HepG2 (cell line): ENCODE measurements at regions of chr7 and their contacts with region 1.

Region 1: DNA sequence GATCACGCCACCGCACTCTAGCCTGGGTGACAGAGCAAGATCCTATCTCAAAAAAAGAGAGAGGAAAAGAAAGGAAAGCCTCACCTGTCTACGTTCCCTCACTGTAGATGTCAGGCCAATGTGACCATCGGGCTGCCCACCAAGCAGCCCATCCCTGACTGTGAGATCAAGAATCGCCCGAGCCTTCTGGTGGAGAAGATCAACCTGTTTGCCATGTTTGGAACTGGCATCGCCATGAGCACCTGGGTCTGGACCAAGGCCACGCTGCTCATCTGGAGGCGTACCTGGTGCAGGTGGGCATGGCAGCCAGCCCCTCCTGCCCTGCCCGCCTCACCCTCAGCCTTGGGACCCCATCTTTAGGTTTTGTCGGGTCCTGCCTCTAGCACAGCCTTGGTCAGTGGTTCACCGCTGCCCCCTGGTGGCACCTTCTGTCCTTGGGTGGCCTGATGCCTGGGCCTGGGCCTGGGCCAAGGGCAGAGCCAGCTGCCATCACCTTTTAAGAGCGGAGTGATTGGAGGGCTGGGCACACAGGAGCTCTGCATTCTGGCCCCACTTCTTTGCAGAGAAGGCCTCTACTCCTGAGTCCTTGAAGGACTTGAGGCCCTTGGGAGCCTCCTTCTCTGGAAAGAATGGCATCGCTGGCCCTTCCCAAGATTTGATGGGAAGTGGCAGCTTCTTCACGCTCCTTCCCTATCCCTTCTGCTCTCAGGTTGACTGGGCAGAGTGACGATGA is 14.4 kb upstream of the AHCYL2 start:
- DNase-seq: peak; percentile 45
- ATAC-seq: peak; percentile 81
- H3K4me3 ChIP-seq: no peak overlapping the region
- H3K27ac ChIP-seq: no peak overlapping the region
- H3K4me1 ChIP-seq: peaks cover 10% of the 10 kb centered on the region
- H3K27me3 ChIP-seq: no peaks in the 10 kb centered on the region
- CTCF ChIP-seq: peak; percentile 97
- EP300 ChIP-seq: no peak
- POLR2A ChIP-seq: no peak
- RAD21 ChIP-seq: peak; percentile 92

Region 2: DNA sequence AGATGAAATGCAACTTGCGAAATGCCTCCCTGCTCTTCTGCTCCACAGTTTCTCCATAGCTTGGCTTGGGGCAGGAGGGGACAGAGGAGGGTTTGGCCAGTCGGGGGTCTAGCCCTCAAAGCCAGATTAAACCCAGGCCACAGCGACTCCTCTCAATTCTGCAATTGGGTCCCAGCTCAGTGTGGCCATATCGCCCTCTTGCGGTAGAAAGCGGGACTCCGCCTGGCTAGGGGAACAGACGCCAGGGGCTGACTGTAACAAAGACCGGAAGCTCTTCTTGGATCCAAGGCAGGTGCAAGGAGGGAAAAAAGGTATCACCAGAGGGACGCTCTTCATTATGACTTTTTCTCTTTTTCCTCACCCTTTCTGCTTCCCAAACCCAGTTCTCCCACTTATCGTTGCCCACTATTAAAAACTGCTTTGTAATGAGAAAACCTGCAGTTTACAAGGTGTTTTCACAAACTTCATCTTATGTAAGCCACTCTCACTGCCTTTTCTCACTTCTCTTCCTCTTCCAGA is 118.9 kb before region 1 on chr7:
- CTCF ChIA-PET with region 1: no interaction called
- POLR2A ChIA-PET with region 1: interaction called, 3 read pairs
- in situ Hi-C with region 1: no loop called
- intact Hi-C with region 1: loop called (anchors 2 kb)
- DNase-seq: peak; percentile 63
- ATAC-seq: peak; percentile 97
- H3K4me3 ChIP-seq: peak overlapping the region in 1 of 3 experiments; percentile 29; a peak in 2 of 6 replicates
- H3K27ac ChIP-seq: no peak overlapping the region
- H3K4me1 ChIP-seq: peaks cover 26% of the 10 kb centered on the region
- H3K27me3 ChIP-seq: no peaks in the 10 kb centered on the region
- CTCF ChIP-seq: peak; percentile 98
- EP300 ChIP-seq: no peak
- POLR2A ChIP-seq: no peak
- RAD21 ChIP-seq: peak; percentile 92

Region 3: GRCh38 chr7:129163875-129164544 is 46.4 kb before region 1 on chr7:
- CTCF ChIA-PET with region 1: interaction called, 50 read pairs
- POLR2A ChIA-PET with region 1: interaction called, 4 read pairs
- in situ Hi-C with region 1: loop called (anchors 5 kb)
- intact Hi-C with region 1: loop called (anchors 1 kb)
- DNase-seq: peak; percentile 40
- ATAC-seq: peak; percentile 49; the same call in 1 of the 3 replicates
- H3K4me3 ChIP-seq: no peak overlapping the region
- H3K27ac ChIP-seq: no peak overlapping the region
- H3K4me1 ChIP-seq: no peaks in the 10 kb centered on the region
- H3K27me3 ChIP-seq: no peaks in the 10 kb centered on the region
- CTCF ChIP-seq: peak; percentile 70
- EP300 ChIP-seq: no peak
- POLR2A ChIP-seq: no peak
- RAD21 ChIP-seq: peak; percentile 57; the same call in 1 of the 2 replicates

Region 4: DNA sequence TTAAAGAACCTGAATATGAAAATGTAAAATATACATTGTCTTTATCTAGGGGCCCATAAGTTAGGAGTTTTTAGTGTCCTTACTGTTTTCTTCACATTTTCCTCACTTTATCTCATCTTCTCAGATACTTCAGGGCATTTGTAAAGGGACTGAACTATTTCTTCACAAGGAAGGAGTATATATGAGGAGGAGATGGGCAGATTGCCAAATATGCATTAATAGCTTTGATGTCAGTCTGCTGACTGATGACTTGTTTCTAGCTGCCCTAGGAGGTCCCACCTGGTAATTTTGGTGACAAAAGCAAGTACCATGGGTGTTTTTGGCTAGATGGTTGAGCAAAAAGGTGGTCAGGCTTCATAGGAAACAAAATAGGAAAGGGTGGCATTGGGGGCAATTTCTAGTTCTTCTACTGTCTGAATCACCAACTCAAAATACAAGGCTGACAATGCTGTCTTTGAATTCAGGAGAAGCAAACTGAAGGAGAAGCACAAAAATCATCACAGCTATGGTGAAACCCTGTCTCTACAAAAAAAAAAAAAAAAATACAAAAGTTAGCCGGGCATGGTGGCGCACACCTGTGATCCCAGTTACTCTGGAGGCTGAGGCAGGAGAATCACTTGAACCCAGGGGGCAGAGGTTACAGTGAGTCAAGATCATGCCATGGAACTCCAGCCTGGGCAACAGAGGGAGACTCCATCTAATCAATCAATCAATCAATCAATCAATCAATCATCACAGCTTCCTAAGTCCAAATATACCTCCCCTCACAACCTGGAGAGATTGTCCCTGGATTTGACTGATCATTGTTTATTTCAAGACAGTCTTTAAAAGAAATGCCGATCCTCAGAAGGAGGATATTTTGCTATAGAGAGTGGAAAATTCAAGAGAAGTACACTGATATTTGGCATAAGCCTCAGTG is 213.5 kb after region 1 on chr7:
- CTCF ChIA-PET with region 1: no interaction called
- POLR2A ChIA-PET with region 1: no interaction called
- in situ Hi-C with region 1: no loop called
- intact Hi-C with region 1: no loop called
- DNase-seq: peak; percentile 12
- ATAC-seq: no peak
- H3K4me3 ChIP-seq: no peak overlapping the region
- H3K27ac ChIP-seq: no peak overlapping the region
- H3K4me1 ChIP-seq: no peaks in the 10 kb centered on the region
- H3K27me3 ChIP-seq: no peaks in the 10 kb centered on the region
- CTCF ChIP-seq: no peak
- EP300 ChIP-seq: no peak
- POLR2A ChIP-seq: no peak
- RAD21 ChIP-seq: no peak

Region 5: DNA sequence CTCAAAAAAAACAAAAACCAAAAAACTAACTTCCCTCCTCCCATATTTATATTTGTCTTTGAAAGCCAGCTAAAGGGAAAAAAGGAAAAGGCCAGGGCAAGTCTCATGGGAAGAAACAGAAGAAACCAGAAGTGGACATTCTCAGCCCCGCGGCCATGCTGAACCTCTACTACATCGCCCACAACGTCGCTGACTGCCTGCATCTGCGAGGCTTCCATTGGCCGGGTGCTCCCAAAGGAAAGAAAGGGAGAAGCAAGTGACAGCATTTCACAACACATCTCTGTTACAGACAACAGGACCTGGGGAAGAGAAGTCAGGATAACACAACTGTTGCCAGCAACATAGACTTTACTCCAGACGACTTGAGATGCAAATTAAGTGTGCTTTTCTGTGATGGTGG is 301.8 kb after region 1 on chr7:
- CTCF ChIA-PET with region 1: no interaction called
- POLR2A ChIA-PET with region 1: no interaction called
- in situ Hi-C with region 1: no loop called
- intact Hi-C with region 1: no loop called
- DNase-seq: no peak
- ATAC-seq: peak; percentile 38; the same call in 1 of the 3 replicates
- H3K4me3 ChIP-seq: no peak overlapping the region
- H3K27ac ChIP-seq: no peak overlapping the region
- H3K4me1 ChIP-seq: no peaks in the 10 kb centered on the region
- H3K27me3 ChIP-seq: peaks cover 4 to 33% of the 10 kb centered on the region in 2 experiments; a peak in 2 of 5 replicates
- CTCF ChIP-seq: no peak
- EP300 ChIP-seq: no peak
- POLR2A ChIP-seq: no peak
- RAD21 ChIP-seq: no peak